Psoas muscle (tissue), 8 donors: ENCODE measurements at regions of chr17 and their contacts with region 1.

Region 1: GRCh38 chr17:67689534-67690177 is 28.1 kb upstream of the NOL11 start:
- DNase-seq: no peak
- ATAC-seq: peak in 2 of 4 donors; percentile 62 to 70
- H3K4me3 ChIP-seq: no peak overlapping the region
- H3K27ac ChIP-seq: no peak overlapping the region
- H3K4me1 ChIP-seq: no peaks in the 10 kb centered on the region
- H3K27me3 ChIP-seq: no peaks in the 10 kb centered on the region
- CTCF ChIP-seq: peak; percentile 82

Region 2: GRCh38 chr17:67475236-67475937 is 214.3 kb before region 1 on chr17:
- intact Hi-C with region 1: loop called in 1 of 2 experiments (anchors 10 kb)
- DNase-seq: peak; percentile 74 to 84
- ATAC-seq: peak; percentile 82 to 95 (median 87)
- H3K4me3 ChIP-seq: peak overlapping the region; percentile 35
- H3K27ac ChIP-seq: peak overlapping the region; percentile 51
- H3K4me1 ChIP-seq: peaks cover 12% of the 10 kb centered on the region
- H3K27me3 ChIP-seq: no peaks in the 10 kb centered on the region
- CTCF ChIP-seq: peak; percentile 87

Region 3: GRCh38 chr17:67818110-67819002 is 128.7 kb after region 1 on chr17:
- intact Hi-C with region 1: no loop called
- DNase-seq: no peak
- ATAC-seq: no peak
- H3K4me3 ChIP-seq: no peak overlapping the region
- H3K27ac ChIP-seq: no peak overlapping the region
- H3K4me1 ChIP-seq: no peaks in the 10 kb centered on the region
- H3K27me3 ChIP-seq: no peaks in the 10 kb centered on the region
- CTCF ChIP-seq: no peak